Posterior cingulate gyrus (tissue), 11 donors: ENCODE measurements at regions of chr3 and their contacts with region 1.

Region 1: GRCh38 chr3:124772081-124772831 is 42.0 kb downstream of the UMPS start:
- DNase-seq: peak in 8 of 10 donors; percentile 41 to 92 (median 55)

Region 2: GRCh38 chr3:124837730-124838186 is 65.5 kb after region 1 on chr3:
- intact Hi-C with region 1: no loop called
- DNase-seq: no peak

Region 3: GRCh38 chr3:124887177-124887931 is 115.1 kb after region 1 on chr3 and contains the start of gene ITGB5:
- intact Hi-C with region 1: loop called (anchors 5 kb)
- DNase-seq: peak in 9 of 10 donors; percentile 14 to 92 (median 46)

Region 4: DNA sequence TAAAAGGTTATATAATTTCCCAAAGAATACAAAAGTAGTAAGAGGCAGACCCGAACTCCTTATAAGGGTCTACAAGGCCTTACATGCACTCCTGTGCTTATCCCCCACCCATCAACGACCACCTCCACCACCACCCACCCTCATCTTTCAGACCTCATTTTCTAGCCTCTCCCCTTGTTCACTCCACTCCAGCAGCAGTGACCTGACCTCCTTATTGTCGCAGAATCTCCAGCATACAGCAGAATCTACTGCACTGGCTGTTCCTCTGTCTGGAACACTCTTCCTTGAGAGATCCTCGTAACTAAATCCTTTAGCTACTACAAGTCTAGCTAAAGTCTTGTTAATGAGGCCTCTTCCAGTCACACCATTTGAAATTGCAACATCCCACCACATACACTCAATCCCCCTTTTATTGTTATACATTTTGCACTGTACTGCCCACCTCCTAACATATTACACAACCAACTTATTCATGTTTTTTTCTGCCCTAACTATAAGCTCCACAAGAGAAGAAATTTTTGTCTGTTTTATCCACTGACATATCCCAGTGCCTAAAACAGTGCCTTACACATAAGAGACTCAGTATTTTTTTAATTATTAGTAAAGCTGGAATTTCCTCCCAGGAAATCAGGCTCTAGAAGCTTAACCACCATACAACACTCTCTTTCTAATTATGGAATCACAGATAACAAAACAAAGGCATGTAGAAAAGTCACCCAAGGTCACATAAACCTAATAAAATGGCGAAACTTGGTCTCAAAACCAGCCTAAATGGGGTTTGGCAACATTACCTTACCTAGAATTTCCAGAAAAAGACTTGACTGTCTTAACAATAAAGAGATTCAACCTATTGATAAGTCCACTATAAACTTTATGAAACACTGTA is 562.7 kb after region 1 on chr3:
- intact Hi-C with region 1: no loop called
- DNase-seq: no peak